ENCODE measurements at regions of chr3 and their contacts with region 1.

Region 1: GRCh38 chr3:141303481-141304223 is 64.7 kb upstream of the ZBTB38 start:
- DNase-seq: peak; percentile 41
- H3K4me3 ChIP-seq: no peak overlapping the region
- CTCF ChIP-seq: peak; percentile 49

Region 2: GRCh38 chr3:141000027-141000663 is 303.5 kb before region 1 on chr3:
- CTCF ChIA-PET with region 1: interaction called, 14 read pairs
- POLR2A ChIA-PET with region 1: no interaction called
- DNase-seq: no peak
- H3K4me3 ChIP-seq: no peak overlapping the region
- CTCF ChIP-seq: peak; percentile 69

Region 3: GRCh38 chr3:141266797-141267555 is 36.7 kb before region 1 on chr3:
- CTCF ChIA-PET with region 1: interaction called, 10 read pairs
- POLR2A ChIA-PET with region 1: no interaction called
- DNase-seq: no peak
- H3K4me3 ChIP-seq: no peak overlapping the region
- CTCF ChIP-seq: no peak

Region 4: DNA sequence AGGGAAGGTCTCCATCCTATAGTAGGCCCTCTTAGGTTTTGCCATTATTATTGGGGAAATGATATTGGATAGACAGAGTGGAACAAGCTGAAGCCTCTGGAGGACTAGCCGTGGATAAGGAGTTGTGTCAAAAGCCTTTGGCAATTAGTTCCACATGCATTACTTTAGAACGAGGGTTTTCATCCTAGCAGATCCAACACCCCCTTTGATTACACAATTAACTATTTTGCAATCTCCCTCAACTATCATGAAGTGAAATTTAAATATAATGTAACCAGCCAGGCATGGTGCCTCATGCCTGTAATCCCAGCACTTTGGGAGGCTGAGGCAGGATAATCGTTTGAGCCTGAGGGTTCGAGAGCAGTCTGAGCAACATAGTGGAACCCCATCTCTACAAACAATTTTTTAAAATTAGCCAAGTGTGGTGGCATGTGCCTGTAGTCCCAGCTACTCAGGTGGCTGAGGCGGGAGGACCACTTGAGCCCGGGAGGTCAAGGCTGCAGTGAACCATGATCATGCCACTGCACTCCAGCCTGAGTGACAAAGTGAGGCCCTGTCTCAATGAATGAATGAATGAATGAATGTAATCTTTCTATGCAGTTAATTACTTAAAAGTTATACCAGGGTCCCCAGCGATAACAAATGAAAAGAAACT is 15.2 kb before region 1 on chr3:
- CTCF ChIA-PET with region 1: interaction called, 42 read pairs
- POLR2A ChIA-PET with region 1: no interaction called
- DNase-seq: no peak
- H3K4me3 ChIP-seq: no peak overlapping the region
- CTCF ChIP-seq: no peak

Region 5: DNA sequence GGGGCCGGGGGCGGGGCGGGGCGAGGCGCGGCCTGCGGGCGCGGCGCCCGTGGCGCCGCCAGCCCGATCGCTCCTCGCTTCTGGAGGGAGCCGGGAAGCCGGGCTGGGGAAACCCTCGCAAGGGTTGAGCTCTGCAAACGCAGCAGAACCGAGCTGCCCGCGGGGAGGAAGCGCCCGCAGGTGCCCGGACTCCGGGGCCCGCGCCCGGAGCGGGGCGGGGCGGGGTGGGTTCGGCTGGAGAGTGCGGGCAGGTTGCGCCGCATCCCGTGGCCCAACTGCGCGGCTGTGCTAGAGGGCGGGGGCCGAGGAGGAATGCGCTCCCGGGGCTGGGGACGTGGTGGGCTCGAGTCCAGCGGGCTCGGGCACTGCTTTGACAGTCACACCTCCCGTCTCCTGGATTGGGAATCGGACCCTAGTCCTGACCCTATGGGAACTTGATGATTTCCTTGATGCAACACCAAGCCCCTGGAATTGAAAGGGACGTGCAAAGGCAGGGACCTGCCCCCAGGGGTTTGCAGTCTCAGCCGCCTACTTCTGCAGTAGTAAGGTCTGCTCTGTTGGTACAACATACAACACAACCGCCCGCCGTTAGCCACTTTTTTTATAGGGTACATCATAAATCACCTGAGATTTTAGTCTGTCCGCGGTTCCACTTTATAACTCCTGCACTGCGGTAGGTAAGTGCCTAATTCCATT is 99.0 kb after region 1 on chr3:
- CTCF ChIA-PET with region 1: interaction called, 19 read pairs
- POLR2A ChIA-PET with region 1: no interaction called
- DNase-seq: no peak
- H3K4me3 ChIP-seq: peak overlapping the region; percentile 62
- CTCF ChIP-seq: no peak

Region 6: GRCh38 chr3:141465221-141465620 is 161.6 kb after region 1 on chr3:
- CTCF ChIA-PET with region 1: interaction called, 624 read pairs
- POLR2A ChIA-PET with region 1: no interaction called
- DNase-seq: no peak
- H3K4me3 ChIP-seq: no peak overlapping the region
- CTCF ChIP-seq: peak; percentile 10

Region 7: DNA sequence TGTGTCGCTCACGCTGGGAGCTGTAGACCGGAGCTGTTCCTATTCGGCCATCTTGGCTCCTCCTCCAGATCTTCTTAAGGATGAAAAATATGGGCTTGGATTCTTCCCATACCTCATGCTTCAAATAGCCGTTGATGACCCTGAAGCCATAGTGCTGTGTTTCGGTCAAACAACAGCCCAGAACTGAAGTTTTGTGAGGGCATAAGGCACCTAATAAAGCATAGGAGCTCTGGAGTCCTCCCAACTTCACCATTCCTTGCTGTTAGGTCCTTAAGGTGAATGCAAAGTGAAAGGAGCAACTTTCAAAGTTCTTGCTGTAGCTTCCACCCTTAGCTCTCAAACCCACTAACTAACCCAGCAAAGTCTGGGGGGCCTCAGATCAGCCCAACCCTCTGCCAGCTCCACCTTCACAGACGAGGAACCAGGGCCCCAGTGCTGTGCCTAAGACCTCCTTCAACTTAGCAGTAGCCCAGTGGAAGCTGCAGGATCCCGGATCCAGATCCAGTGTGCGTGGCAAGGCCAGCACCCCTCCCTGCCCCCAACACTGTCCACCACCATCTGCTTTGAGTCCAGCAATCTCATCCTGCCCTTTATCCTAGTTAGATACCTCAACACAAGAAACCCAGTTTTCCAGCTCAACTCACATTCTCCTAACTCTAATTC is 459.6 kb after region 1 on chr3 and contains the start of gene GRK7:
- CTCF ChIA-PET with region 1: no interaction called
- POLR2A ChIA-PET with region 1: no interaction called
- DNase-seq: no peak
- H3K4me3 ChIP-seq: no peak within 1 kb of the TSS
- CTCF ChIP-seq: no peak

Measured in AG04449 (cell line).